Posterior vena cava (tissue), 2 donors: ENCODE measurements at regions of chr17 and their contacts with region 1.

Region 1: DNA sequence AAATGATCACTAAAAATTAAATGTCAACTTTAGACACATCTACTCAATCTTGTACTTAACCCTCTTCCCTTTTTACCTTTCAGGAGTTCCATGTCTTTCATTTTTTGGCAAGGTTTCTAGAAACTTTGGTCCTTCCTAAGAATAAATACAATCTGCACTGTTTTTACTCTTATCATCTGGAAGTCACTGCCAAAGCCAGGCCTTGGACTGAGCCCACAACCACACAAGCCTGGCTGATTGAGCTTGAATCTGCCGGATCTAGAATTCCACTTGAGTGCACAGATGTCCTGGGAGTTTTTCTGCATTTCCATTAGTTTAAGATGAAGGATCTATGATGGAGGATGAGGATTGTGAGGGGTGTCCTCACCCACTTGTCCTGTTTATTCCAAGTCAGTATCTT is 126.1 kb downstream of the VPS53 start:
- DNase-seq: no peak

Region 2: DNA sequence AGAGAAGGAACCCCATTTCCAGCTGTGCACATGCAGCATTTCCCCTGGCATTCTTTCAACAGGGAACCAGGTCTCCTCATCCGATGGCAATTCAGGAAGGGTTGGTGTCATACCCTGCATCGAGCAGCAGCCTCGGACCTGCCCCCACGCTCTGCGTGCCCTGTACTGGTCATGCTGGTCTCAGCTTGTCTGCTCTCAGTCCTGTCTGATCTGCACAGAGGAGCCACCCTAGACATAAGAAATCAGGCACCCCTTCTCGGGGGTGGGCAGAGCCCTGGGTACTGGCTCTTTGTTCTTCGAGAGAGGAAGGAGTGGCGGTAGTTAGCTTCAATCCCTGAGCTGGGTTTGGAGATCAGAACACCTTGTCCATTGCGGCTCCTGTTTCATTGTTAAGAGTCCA is 73.9 kb before region 1 on chr17:
- intact Hi-C with region 1: loop called in 1 of 2 experiments (anchors 2 kb)
- DNase-seq: peak; percentile 79

Region 3: GRCh38 chr17:549177-550040 is 39.1 kb before region 1 on chr17:
- intact Hi-C with region 1: no loop called
- DNase-seq: no peak